ENCODE measurements at regions of chr11 and their contacts with region 1.

Region 1: DNA sequence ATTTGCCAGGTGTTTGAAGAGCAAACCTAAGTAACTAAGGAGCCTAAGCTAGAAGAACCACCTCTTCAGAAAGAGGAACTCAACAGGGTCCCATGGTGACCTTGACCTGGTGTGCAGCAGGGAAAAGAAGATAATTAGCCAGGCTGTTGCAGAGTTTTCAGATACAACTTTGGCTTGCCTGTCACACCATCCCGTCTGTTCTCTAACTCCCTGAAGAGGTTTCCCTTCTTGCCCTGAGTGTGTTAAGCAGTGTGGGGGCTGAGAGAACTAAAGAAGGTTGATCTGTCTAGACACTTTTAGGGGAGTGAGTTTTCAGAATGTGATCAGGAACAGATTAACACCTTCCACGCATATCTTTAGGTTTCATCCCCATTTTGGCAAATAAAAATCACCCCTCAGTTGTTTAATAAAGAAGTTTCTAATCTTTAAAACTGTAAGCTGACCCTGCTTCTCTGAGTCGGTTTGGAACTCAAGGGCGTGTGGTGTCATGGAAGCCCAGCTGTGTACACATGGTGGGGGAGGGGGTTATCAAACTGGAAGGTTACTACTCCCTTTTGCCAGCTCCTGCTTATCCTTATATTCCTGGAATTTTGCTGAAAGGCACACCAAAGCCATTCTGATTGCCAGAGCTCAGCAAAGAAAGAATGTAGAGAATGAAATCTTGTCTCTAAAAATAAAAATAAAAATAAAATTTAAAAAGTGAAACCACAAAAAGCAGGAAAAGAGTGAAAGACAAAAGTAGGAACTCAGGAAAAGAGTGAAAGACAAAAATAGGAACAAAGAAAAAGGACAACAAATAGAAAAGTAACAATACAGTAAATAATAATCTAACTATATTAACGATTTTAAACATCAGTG is 70.2 kb downstream of the DBX1 start:
- DNase-seq: no peak
- ATAC-seq: no peak
- H3K4me3 ChIP-seq: no peak overlapping the region
- H3K4me3 Mint-ChIP-seq: no peak overlapping the region
- H3K27ac ChIP-seq: no peak overlapping the region
- H3K27ac Mint-ChIP-seq: no peak overlapping the region
- H3K4me1 ChIP-seq: no peaks in the 10 kb centered on the region
- H3K4me1 Mint-ChIP-seq: peaks cover 0 to 20% (median 20%) of the 10 kb centered on the region in 3 donors
- H3K27me3 ChIP-seq: no peaks in the 10 kb centered on the region
- H3K27me3 Mint-ChIP-seq: peaks cover 3 to 15% of the 10 kb centered on the region in 2 donors

Region 2: DNA sequence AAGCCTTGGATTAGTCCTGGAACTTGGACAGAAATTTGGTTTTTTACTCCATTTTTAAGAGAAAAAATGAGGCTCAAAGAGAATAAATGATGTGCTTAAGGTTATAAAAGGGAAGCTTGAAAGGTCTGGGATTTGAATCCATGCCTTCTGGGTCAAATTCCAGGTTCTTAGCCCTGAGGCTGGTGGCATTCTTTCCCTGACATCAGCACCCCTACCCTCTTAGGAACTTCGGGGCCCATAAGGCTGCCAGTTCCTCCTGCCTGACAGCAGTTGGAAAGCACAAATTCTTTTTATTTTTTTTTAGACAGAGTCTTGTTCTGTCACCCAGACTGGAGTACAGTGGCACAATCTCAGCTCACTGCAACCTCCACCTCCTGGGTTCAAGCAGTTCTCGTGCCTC is 18.1 kb after region 1 on chr11:
- CTCF ChIA-PET with region 1: interaction called in 1 of 2 experiments, 12 read pairs
- POLR2A ChIA-PET with region 1: interaction called in 1 of 2 experiments, 3 read pairs
- DNase-seq: no peak
- ATAC-seq: no peak
- H3K4me3 ChIP-seq: no peak overlapping the region
- H3K4me3 Mint-ChIP-seq: no peak overlapping the region
- H3K27ac ChIP-seq: no peak overlapping the region
- H3K27ac Mint-ChIP-seq: no peak overlapping the region
- H3K4me1 ChIP-seq: no peaks in the 10 kb centered on the region
- H3K4me1 Mint-ChIP-seq: no peaks in the 10 kb centered on the region
- H3K27me3 ChIP-seq: peaks cover 0 to 12% of the 10 kb centered on the region in 2 experiments
- H3K27me3 Mint-ChIP-seq: peaks cover 8 to 12% of the 10 kb centered on the region in 2 donors

Region 3: GRCh38 chr11:21173476-21173875 is 1083.5 kb after region 1 on chr11:
- CTCF ChIA-PET with region 1: interaction called in 1 of 2 experiments, 11 read pairs
- POLR2A ChIA-PET with region 1: no interaction called
- DNase-seq: no peak
- ATAC-seq: no peak
- H3K4me3 ChIP-seq: no peak overlapping the region
- H3K4me3 Mint-ChIP-seq: no peak overlapping the region
- H3K27ac ChIP-seq: no peak overlapping the region
- H3K27ac Mint-ChIP-seq: no peak overlapping the region
- H3K4me1 ChIP-seq: no peaks in the 10 kb centered on the region
- H3K4me1 Mint-ChIP-seq: no peaks in the 10 kb centered on the region
- H3K27me3 ChIP-seq: no peaks in the 10 kb centered on the region
- H3K27me3 Mint-ChIP-seq: no peaks in the 10 kb centered on the region

Measured in T-cell (primary cell).